SK-N-SH (cell line): ENCODE measurements at regions of chr5 and their contacts with region 1.

Region 1: DNA sequence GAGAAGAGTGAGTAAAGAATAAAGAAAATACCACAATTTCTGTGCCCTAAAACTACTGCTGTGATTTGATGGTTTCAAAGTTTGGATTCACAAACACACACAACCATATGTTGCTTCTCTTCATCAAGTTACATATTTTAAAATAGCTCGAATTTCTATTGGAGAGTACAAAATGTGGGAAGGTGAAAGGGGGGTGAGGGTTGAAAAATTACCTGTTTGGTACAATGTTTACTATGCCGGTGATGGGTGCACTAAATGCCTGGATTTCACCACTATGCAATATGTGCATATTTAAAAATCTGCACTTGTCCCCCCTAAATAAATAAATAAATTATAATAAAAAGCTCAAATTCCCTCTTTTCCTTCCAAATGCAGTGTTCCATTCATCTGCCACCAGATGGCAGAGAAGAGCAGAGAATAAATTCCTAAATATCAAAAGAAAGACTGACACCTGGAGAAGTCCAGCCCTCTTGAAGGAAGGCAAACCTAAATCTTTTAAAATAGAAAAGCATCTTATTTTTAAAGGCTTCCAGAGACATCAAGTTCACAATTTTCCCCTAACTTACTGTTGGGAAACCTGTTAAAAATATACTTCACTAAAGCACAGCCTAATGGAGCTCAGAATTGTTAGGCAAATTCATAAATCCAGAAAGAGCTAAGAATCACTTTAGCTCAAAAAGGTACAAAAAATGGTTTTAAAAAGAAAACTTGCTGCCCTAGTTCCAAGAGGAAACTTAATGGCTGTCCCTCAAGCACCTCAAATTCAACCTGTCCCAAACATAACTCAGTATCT is 24.8 kb upstream of the HNRNPA0 start:
- DNase-seq: peak; percentile 35
- H3K4me3 ChIP-seq: no peak overlapping the region; a peak in 1 of 4 replicates
- H3K27ac ChIP-seq: no peak overlapping the region
- H3K4me1 ChIP-seq: no peaks in the 10 kb centered on the region
- H3K27me3 ChIP-seq: no peaks in the 10 kb centered on the region
- CTCF ChIP-seq: peak; percentile 83
- EP300 ChIP-seq: no peak
- RAD21 ChIP-seq: peak; percentile 81

Region 2: DNA sequence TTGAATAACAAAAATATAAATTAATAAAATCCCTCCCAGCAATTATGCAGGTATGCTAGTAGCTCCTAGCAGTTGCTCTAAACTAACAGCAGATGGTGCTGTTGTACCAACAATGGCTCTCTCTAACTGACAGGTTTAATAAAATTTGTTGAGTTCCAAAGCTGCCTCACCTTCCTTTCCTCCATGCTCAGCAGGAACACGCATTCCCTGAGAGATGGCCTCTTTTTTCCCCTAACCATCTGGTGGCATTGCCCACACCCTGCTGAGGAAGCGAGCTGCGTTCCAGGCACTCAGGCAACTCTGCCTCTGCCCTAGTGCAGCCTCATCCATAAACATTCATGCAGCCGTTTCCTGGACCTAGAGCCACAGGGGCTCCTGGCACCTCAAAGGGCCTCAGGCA is 149.3 kb before region 1 on chr5:
- CTCF ChIA-PET with region 1: interaction called, 13 read pairs
- POLR2A ChIA-PET with region 1: no interaction called
- DNase-seq: peak; percentile 75
- H3K4me3 ChIP-seq: peak overlapping the region in 1 of 2 experiments; percentile 45; a peak in 1 of 4 replicates
- H3K27ac ChIP-seq: no peak overlapping the region
- H3K4me1 ChIP-seq: peaks cover 0 to 3% of the 10 kb centered on the region in 2 experiments; a peak in 1 of 4 replicates
- H3K27me3 ChIP-seq: no peaks in the 10 kb centered on the region
- CTCF ChIP-seq: peak; percentile 93
- EP300 ChIP-seq: no peak
- RAD21 ChIP-seq: peak; percentile 96

Region 3: DNA sequence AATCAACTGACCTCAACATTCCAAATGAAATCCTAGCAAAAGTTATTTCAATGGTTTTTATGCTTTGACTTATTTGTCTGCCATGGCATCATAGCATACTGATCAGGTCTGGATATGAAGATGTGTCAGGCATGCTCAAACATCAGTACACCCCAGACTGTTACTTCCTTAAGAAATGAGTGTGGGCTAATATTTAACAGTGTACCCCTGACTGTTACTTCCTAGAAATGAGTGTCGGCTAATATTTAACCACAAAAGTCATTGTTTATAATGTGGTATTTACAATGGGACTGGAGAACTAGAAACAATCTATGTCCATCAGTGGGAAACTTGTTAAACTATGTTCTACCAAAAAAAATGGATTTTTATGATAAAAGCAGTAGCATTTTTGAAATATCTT is 13.3 kb after region 1 on chr5:
- CTCF ChIA-PET with region 1: interaction called, 16 read pairs
- POLR2A ChIA-PET with region 1: no interaction called
- DNase-seq: no peak
- H3K4me3 ChIP-seq: no peak overlapping the region
- H3K27ac ChIP-seq: no peak overlapping the region
- H3K4me1 ChIP-seq: no peaks in the 10 kb centered on the region; a peak in 1 of 4 replicates
- H3K27me3 ChIP-seq: no peaks in the 10 kb centered on the region
- CTCF ChIP-seq: no peak
- EP300 ChIP-seq: no peak
- RAD21 ChIP-seq: no peak

Region 4: GRCh38 chr5:137815202-137815985 is 36.4 kb after region 1 on chr5:
- CTCF ChIA-PET with region 1: interaction called, 21 read pairs
- POLR2A ChIA-PET with region 1: no interaction called
- DNase-seq: no peak
- H3K4me3 ChIP-seq: no peak overlapping the region
- H3K27ac ChIP-seq: no peak overlapping the region
- H3K4me1 ChIP-seq: no peaks in the 10 kb centered on the region; a peak in 1 of 4 replicates
- H3K27me3 ChIP-seq: no peaks in the 10 kb centered on the region
- CTCF ChIP-seq: no peak
- EP300 ChIP-seq: no peak
- RAD21 ChIP-seq: no peak

Region 5: GRCh38 chr5:137836997-137837396 is 58.0 kb after region 1 on chr5:
- CTCF ChIA-PET with region 1: interaction called, 13 read pairs
- POLR2A ChIA-PET with region 1: no interaction called
- DNase-seq: no peak
- H3K4me3 ChIP-seq: no peak overlapping the region
- H3K27ac ChIP-seq: peak overlapping the region; percentile 68 to 82; a peak in 3 of 4 replicates
- H3K4me1 ChIP-seq: peaks cover 3 to 32% of the 10 kb centered on the region in 2 experiments; a peak in 3 of 4 replicates
- H3K27me3 ChIP-seq: no peaks in the 10 kb centered on the region
- CTCF ChIP-seq: no peak
- EP300 ChIP-seq: peak in 1 of 2 experiments; percentile 58; a peak in 2 of 4 replicates
- RAD21 ChIP-seq: no peak

Region 6: GRCh38 chr5:138035605-138036537 is 256.9 kb after region 1 on chr5:
- CTCF ChIA-PET with region 1: interaction called, 28 read pairs
- POLR2A ChIA-PET with region 1: no interaction called
- DNase-seq: peak; percentile 75
- H3K4me3 ChIP-seq: peak overlapping the region in 1 of 2 experiments; percentile 38; a peak in 1 of 4 replicates
- H3K27ac ChIP-seq: peak overlapping the region; percentile 2 to 50; a peak in 3 of 4 replicates
- H3K4me1 ChIP-seq: peaks cover 6 to 12% of the 10 kb centered on the region in 2 experiments; a peak in 3 of 4 replicates
- H3K27me3 ChIP-seq: no peaks in the 10 kb centered on the region
- CTCF ChIP-seq: peak; percentile 93
- EP300 ChIP-seq: no peak
- RAD21 ChIP-seq: peak; percentile 78

Region 7: GRCh38 chr5:138128334-138128733 is 349.4 kb after region 1 on chr5:
- CTCF ChIA-PET with region 1: interaction called, 49 read pairs
- POLR2A ChIA-PET with region 1: no interaction called
- DNase-seq: no peak
- H3K4me3 ChIP-seq: no peak overlapping the region
- H3K27ac ChIP-seq: no peak overlapping the region
- H3K4me1 ChIP-seq: no peaks in the 10 kb centered on the region
- H3K27me3 ChIP-seq: no peaks in the 10 kb centered on the region
- CTCF ChIP-seq: no peak
- EP300 ChIP-seq: no peak
- RAD21 ChIP-seq: no peak

Region 8: DNA sequence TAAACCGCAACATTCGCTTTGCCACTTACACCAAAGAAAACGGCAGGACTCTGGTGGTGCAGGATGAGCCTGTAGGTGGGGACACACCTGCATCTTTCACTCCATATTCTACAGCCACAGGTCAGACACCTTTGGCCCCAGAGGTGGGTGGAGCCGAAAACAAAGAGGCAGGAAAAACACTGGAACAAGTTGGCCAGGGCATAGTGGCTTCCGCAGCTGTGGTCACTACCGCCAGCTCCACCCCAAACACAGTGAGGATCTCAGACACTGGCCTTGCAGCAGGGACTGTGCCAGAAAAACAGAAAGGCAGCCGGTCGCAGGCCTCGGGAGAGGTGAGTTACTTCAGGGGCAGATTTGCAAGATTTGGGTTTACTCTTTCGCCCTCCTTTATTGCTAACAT is 607.3 kb after region 1 on chr5:
- CTCF ChIA-PET with region 1: no interaction called
- POLR2A ChIA-PET with region 1: no interaction called
- DNase-seq: no peak
- H3K4me3 ChIP-seq: no peak overlapping the region
- H3K27ac ChIP-seq: no peak overlapping the region; a peak in 1 of 4 replicates
- H3K4me1 ChIP-seq: peaks cover 0 to 5% of the 10 kb centered on the region in 2 experiments; a peak in 1 of 4 replicates
- H3K27me3 ChIP-seq: no peaks in the 10 kb centered on the region
- CTCF ChIP-seq: no peak
- EP300 ChIP-seq: no peak
- RAD21 ChIP-seq: no peak